H1 (cell line): ENCODE measurements at regions of chr18 and their contacts with region 1.

Region 1: DNA sequence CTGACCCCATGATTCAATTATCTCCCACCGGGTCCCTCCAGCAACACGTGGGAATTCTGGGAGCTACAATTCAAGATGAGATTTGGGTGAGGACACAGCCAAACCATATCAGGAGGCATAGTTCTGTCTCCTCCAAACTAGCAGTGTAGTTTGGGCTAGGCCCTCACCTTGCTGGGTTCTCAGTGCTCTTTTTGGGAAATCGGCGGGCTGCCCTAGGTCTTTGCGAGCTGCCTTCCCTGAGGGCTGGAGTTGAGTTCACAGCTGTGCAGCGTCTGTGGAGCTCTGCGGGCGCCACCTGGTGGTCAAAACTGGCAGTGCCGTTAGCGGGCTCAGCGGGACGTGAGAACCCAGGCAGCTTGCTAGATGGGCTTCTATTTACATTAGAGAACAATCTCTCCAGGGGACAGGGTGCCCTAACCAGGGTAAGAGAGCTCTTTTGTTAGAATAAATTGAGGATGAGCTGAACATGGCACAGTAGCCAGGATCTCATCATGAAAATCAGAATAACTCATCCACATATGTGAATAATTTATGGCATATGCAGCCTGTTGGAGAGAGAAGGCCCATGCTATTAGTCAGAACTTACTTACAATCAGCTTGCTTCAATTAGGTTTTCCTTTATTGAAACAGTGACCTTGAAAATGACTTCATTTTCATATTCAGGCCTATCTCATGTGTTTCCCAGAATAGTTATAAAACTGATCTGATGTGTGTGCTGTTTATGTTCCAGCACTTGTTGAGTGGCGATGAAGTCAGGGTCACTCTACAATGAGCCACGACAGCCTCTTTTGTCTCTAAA is 27.4 kb upstream of the YES1 start:
- DNase-seq: peak; percentile 71 to 98
- H3K4me3 ChIP-seq: no peak overlapping the region
- H3K27ac ChIP-seq: no peak overlapping the region
- H3K4me1 ChIP-seq: no peaks in the 10 kb centered on the region
- H3K27me3 ChIP-seq: peaks cover 19 to 52% (median 42%) of the 10 kb centered on the region in 4 experiments
- CTCF ChIP-seq: peak; percentile 87 to 95 (median 88)
- EP300 ChIP-seq: peak in 1 of 2 experiments; percentile 13; a peak in 1 of 3 replicates
- POLR2A ChIP-seq: no peak
- RAD21 ChIP-seq: peak; percentile 80 to 85

Region 2: GRCh38 chr18:616380-616995 is 222.9 kb before region 1 on chr18:
- CTCF ChIA-PET with region 1: interaction called, 13 read pairs
- POLR2A ChIA-PET with region 1: no interaction called
- DNase-seq: no peak
- H3K4me3 ChIP-seq: no peak overlapping the region
- H3K27ac ChIP-seq: no peak overlapping the region
- H3K4me1 ChIP-seq: no peaks in the 10 kb centered on the region
- H3K27me3 ChIP-seq: no peaks in the 10 kb centered on the region
- CTCF ChIP-seq: peak in 2 of 3 experiments; percentile 45 to 58; a peak in 2 of 4 replicates
- EP300 ChIP-seq: no peak
- POLR2A ChIP-seq: no peak
- RAD21 ChIP-seq: peak; percentile 85 to 90

Region 3: GRCh38 chr18:712401-713134 is 126.9 kb before region 1 on chr18 and contains the start of gene ENOSF1:
- CTCF ChIA-PET with region 1: interaction called, 11 read pairs
- POLR2A ChIA-PET with region 1: interaction called, 3 read pairs
- DNase-seq: peak; percentile 79 to 99
- H3K4me3 ChIP-seq: peak within 1 kb of the TSS; percentile 64 to 86 (median 76)
- H3K27ac ChIP-seq: peak within 1 kb of the TSS; percentile 50; the same call in 1 of the 2 replicates
- H3K4me1 ChIP-seq: peaks cover 0 to 3% (median 1%) of the 10 kb centered on the region in 4 experiments; a peak in 2 of 7 replicates
- H3K27me3 ChIP-seq: no peaks in the 10 kb centered on the region
- CTCF ChIP-seq: peak; percentile 76 to 85 (median 84)
- EP300 ChIP-seq: no peak; a peak in 1 of 3 replicates
- POLR2A ChIP-seq: peak in 1 of 2 experiments; percentile 62; a peak in 1 of 3 replicates
- RAD21 ChIP-seq: peak; percentile 64 to 78
- total RNA-seq, gene ENOSF1: 25.6 and 26.4 TPM in 2 replicates

Region 4: GRCh38 chr18:741931-742512 is 97.4 kb before region 1 on chr18:
- CTCF ChIA-PET with region 1: interaction called, 110 read pairs
- POLR2A ChIA-PET with region 1: no interaction called
- DNase-seq: no peak
- H3K4me3 ChIP-seq: no peak overlapping the region
- H3K27ac ChIP-seq: no peak overlapping the region
- H3K4me1 ChIP-seq: no peaks in the 10 kb centered on the region
- H3K27me3 ChIP-seq: no peaks in the 10 kb centered on the region
- CTCF ChIP-seq: peak in 2 of 3 experiments; percentile 41 to 54; a peak in 2 of 4 replicates
- EP300 ChIP-seq: no peak
- POLR2A ChIP-seq: no peak
- RAD21 ChIP-seq: peak; percentile 77 to 78

Region 5: GRCh38 chr18:754666-755065 is 84.8 kb before region 1 on chr18:
- CTCF ChIA-PET with region 1: interaction called, 12 read pairs
- POLR2A ChIA-PET with region 1: no interaction called
- DNase-seq: no peak
- H3K4me3 ChIP-seq: no peak overlapping the region
- H3K27ac ChIP-seq: no peak overlapping the region
- H3K4me1 ChIP-seq: no peaks in the 10 kb centered on the region
- H3K27me3 ChIP-seq: no peaks in the 10 kb centered on the region
- CTCF ChIP-seq: no peak
- EP300 ChIP-seq: no peak
- POLR2A ChIP-seq: no peak
- RAD21 ChIP-seq: no peak

Region 6: GRCh38 chr18:923141-923866 is 83.9 kb after region 1 on chr18:
- CTCF ChIA-PET with region 1: no interaction called
- POLR2A ChIA-PET with region 1: no interaction called
- DNase-seq: no peak
- H3K4me3 ChIP-seq: no peak overlapping the region
- H3K27ac ChIP-seq: no peak overlapping the region
- H3K4me1 ChIP-seq: no peaks in the 10 kb centered on the region
- H3K27me3 ChIP-seq: no peaks in the 10 kb centered on the region
- CTCF ChIP-seq: no peak
- EP300 ChIP-seq: no peak
- POLR2A ChIP-seq: no peak
- RAD21 ChIP-seq: no peak